Posterior vena cava (tissue), 2 donors: ENCODE measurements at regions of chr3 and their contacts with region 1.

Region 1: GRCh38 chr3:59580996-59581395 is 531.2 kb upstream of the CFAP20DC start:
- DNase-seq: no peak

Region 2: DNA sequence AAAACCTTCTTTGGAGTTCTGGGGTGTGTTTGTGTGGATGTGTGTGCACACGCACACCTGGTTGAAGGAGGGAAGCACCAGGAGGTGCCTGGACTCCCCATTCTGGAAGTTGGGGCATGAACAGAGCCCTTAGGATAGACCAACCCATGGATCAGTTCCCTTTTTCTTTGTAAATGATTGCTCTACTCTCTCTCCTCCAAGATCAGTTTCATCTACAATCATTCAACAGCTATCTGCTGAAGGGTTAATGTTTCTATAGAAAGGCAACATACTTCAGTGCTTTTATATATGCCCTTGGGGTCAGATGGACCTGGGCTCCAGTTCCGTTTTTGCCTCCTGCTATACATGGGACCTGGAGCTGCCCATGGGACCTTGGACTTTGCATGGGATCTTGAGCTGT is 179.1 kb before region 1 on chr3:
- intact Hi-C with region 1: no loop called
- DNase-seq: no peak

Region 3: GRCh38 chr3:59658274-59658673 is 77.3 kb after region 1 on chr3:
- intact Hi-C with region 1: loop called in 1 of 2 experiments (anchors 2 kb)
- DNase-seq: no peak